ENCODE measurements at regions of chr16 and their contacts with region 1.

Region 1: DNA sequence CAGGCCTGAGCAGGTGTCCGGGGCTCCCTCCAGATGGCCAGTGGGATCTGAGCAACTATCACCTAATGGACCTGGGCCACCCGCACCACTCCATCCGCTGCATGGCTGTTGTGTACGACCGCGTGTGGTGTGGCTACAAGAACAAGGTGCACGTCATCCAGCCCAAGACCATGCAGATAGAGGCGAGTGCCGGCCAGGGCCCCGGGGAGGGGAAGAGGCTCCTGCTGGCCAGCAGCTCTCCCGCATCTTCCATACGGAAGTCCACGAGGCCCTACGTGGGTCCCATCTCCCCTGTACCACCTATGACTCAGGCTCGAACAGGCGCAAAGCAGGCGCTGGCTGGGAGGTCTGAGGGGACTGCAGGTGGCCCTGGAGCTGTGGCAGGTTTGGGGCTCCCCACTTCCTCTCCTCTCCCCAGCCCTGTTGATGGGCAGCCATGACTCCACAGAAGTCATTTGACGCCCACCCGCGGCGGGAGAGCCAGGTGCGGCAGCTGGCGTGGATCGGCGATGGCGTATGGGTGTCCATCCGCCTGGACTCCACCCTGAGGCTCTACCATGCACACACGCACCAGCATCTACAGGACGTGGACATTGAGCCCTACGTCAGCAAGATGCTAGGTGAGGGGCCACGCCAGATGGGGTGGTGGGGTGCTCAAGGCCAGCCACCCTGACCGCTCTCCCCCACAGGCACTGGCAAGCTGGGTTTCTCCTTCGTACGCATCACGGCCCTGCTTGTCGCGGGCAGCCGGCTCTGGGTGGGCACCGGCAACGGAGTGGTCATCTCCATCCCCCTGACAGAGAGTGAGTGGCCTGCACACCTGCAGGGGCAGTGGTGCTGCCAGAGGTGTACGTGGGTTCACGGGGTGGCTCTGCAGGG is 4.0 kb downstream of the NME3 start:
- DNase-seq: no peak
- ATAC-seq: no peak
- H3K4me3 ChIP-seq: no peak overlapping the region
- H3K27ac ChIP-seq: no peak overlapping the region
- H3K4me1 ChIP-seq: peaks cover 14% of the 10 kb centered on the region
- H3K27me3 ChIP-seq: no peaks in the 10 kb centered on the region
- CTCF ChIP-seq: no peak

Region 2: GRCh38 chr16:1754204-1754603 is 13.2 kb before region 1 on chr16:
- CTCF ChIA-PET with region 1: no interaction called
- POLR2A ChIA-PET with region 1: interaction called, 10 read pairs
- in situ Hi-C with region 1: no loop called
- intact Hi-C with region 1: no loop called
- DNase-seq: no peak
- ATAC-seq: no peak
- H3K4me3 ChIP-seq: no peak overlapping the region
- H3K27ac ChIP-seq: no peak overlapping the region
- H3K4me1 ChIP-seq: no peaks in the 10 kb centered on the region
- H3K27me3 ChIP-seq: no peaks in the 10 kb centered on the region
- CTCF ChIP-seq: no peak

Measured in Panc1 (cell line).